ENCODE measurements at regions of chr1 and their contacts with region 1.

Region 1: DNA sequence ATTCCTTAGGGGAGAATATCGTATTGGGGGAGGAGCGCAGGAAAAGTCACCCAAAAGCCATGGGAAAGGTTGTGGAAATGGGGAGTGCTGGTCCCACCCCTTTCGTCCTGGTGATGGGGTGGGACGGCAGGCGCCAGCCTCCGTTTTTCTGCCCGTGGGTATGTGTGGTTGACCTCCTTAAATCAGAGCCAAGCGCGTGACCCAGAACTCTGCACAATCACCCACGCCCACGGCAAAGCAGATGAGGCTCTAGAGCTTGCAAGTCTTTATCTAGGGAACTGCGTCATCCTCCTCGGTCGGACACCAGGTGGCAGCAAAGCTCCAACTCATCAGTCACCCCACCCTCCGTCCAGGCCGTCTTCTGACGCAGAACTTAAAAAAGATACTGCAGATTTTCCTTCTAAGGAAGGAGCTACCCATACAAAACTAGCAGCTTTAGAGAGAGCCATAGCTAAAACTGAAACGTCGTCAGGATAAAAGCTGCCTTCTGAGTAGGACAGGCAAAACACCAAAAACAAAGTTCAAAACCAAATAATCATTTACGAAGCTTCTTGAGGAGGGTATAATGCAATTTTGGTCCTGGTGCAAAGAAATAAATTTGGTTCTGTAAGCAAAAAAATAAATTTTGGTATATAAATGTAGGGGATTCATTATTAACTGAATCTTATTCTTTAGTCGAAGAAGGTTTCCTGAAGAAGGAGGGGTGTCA is 62.0 kb downstream of the TBX19 start:
- DNase-seq: peak; percentile 76 to 96 (median 85)
- ATAC-seq: peak; percentile 98 to 99 (median 99)
- H3K4me3 ChIP-seq: no peak overlapping the region
- H3K4me3 Mint-ChIP-seq: peak overlapping the region in 2 of 3 donors; percentile 11 to 50
- H3K27ac ChIP-seq: peak overlapping the region; percentile 68
- H3K27ac Mint-ChIP-seq: peak overlapping the region; percentile 94
- H3K4me1 ChIP-seq: peaks cover 3 to 11% of the 10 kb centered on the region in 2 experiments
- H3K4me1 Mint-ChIP-seq: peaks cover 22 to 64% (median 33%) of the 10 kb centered on the region in 3 donors
- H3K27me3 ChIP-seq: no peaks in the 10 kb centered on the region
- H3K27me3 Mint-ChIP-seq: no peaks in the 10 kb centered on the region

Region 2: DNA sequence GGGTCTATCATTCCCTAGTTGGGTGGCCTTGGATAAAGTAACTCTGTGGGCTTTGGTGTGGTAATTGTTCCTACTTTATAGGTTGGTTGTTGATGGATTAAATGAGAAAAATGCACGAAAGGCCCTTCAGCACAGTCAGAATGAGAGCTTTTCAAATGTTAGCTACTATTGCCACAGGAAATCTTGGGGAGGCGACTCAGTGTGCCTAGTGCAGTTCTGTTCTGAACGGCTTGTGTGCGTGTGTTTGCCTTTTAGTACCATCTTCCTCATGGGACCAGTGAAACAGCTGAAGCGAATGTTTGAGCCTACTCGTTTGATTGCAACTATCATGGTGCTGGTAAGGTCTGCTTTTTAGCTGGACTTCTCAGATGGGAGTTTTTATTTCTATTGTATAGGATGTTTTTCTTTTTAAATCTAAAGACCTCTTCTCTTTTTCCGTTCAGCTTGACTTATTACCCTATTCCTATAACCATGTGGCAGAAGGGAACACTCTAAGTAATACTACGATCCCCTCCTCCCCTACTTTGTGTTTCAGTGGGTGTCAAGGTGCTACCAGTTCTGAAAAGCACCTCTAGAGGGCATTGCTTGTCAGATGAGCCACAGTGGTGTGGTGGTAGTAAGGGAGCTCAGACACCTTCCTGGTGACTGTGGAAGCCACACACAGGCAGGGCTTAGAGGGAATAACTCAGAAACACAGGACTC is 107.7 kb before region 1 on chr1:
- CTCF ChIA-PET with region 1: interaction called, 3 to 12 read pairs
- POLR2A ChIA-PET with region 1: no interaction called
- DNase-seq: peak in 27 of 35 experiments; percentile 3 to 65 (median 23)
- ATAC-seq: peak; percentile 85 to 93 (median 86)
- H3K4me3 ChIP-seq: no peak overlapping the region
- H3K4me3 Mint-ChIP-seq: no peak overlapping the region
- H3K27ac ChIP-seq: no peak overlapping the region
- H3K27ac Mint-ChIP-seq: no peak overlapping the region
- H3K4me1 ChIP-seq: peaks cover 0 to 8% of the 10 kb centered on the region in 2 experiments
- H3K4me1 Mint-ChIP-seq: peaks cover 61 to 65% (median 62%) of the 10 kb centered on the region in 3 donors
- H3K27me3 ChIP-seq: no peaks in the 10 kb centered on the region
- H3K27me3 Mint-ChIP-seq: no peaks in the 10 kb centered on the region

Region 3: GRCh38 chr1:168439456-168440375 is 97.0 kb after region 1 on chr1:
- CTCF ChIA-PET with region 1: interaction called, 10 to 20 read pairs
- POLR2A ChIA-PET with region 1: no interaction called
- DNase-seq: peak; percentile 63 to 92 (median 78)
- ATAC-seq: peak; percentile 85 to 88 (median 86)
- H3K4me3 ChIP-seq: peak overlapping the region in 1 of 2 donors; percentile 12
- H3K4me3 Mint-ChIP-seq: peak overlapping the region; percentile 62 to 73 (median 71)
- H3K27ac ChIP-seq: peak overlapping the region; percentile 22
- H3K27ac Mint-ChIP-seq: peak overlapping the region; percentile 83 to 89
- H3K4me1 ChIP-seq: peaks cover 11 to 31% of the 10 kb centered on the region in 2 experiments
- H3K4me1 Mint-ChIP-seq: peaks cover 53 to 60% (median 59%) of the 10 kb centered on the region in 3 donors
- H3K27me3 ChIP-seq: no peaks in the 10 kb centered on the region
- H3K27me3 Mint-ChIP-seq: peaks cover 0 to 3% of the 10 kb centered on the region in 2 donors

Region 4: DNA sequence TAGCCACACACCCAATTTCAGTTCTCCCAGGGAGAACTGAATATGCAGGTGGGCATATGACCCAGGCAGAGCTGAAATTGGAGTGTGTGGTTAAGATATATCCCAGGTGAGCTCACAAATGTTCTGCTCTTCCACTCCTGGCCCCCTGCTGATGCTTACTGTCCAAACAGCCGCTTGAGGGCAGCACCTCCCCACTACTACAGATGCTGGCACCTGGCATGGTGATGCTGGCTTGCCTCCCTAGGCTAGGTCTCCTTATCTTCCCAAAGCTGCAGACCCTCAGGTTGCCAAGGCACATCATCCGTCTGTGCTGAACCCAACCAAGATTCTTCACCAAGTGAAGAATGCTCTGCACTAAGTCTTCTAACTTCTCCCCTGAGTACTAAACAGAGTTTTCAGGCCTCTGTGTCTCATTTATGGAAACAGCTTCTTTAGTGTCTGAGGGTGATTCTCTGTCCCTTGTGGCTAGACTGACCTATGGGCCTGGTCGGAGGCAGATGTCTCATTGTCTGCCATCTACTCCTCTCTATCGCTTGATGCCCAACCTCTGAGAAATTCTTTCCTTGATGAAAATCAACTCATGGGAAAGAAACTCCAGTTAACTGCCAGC is 260.9 kb after region 1 on chr1:
- CTCF ChIA-PET with region 1: interaction called, 6 to 13 read pairs
- POLR2A ChIA-PET with region 1: no interaction called
- DNase-seq: peak; percentile 27 to 79 (median 62)
- ATAC-seq: peak; percentile 66 to 87 (median 77)
- H3K4me3 ChIP-seq: no peak overlapping the region
- H3K4me3 Mint-ChIP-seq: no peak overlapping the region
- H3K27ac ChIP-seq: no peak overlapping the region
- H3K27ac Mint-ChIP-seq: no peak overlapping the region
- H3K4me1 ChIP-seq: no peaks in the 10 kb centered on the region
- H3K4me1 Mint-ChIP-seq: no peaks in the 10 kb centered on the region
- H3K27me3 ChIP-seq: no peaks in the 10 kb centered on the region
- H3K27me3 Mint-ChIP-seq: peaks cover 1 to 4% of the 10 kb centered on the region in 2 donors

Region 5: DNA sequence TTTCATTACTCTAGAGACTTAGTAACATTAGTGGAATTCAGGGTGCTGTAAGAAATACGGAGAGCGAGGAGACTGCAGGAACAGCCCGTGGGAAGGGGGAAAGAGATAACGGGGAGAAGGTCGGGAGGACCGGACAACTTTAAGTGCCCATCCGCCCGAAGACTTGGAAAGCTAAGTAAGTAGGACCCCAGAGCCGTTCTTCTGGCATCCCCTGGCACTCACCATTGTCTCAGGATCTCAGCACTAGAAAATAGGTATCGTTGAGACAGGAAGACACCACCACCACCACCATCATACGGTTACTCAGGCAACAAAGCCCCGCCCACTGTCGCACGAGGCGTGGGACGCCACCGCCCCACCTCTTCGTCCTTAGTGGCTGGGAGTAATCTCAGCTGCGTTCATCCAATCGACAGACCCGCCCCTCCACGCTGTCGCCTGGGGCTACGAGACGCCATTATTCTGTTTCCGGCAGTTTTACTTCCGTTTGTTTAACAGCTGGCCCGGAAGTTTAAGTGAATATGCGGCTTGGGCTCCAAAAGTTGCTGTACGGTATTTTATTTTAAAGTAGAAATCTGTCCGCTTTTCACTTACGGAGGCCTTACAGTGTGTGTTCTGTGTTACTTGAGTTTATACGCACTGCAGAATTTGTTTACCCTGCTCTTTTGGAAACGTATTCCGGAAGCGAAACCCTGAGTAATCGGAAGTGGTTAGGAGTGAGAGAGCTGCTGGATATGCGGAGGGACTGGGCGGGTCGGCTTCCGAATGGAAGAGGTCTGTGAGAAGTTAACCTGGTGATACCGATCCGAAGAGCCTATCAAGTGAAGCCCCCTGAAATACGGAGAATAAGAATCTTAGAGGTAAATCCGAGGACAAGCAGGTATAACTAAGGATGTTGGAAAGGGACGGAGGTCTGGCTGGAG is 1025.0 kb after region 1 on chr1 and contains the starts of genes BLZF1 and NME7:
- CTCF ChIA-PET with region 1: interaction called in 1 of 2 experiments, 12 read pairs
- POLR2A ChIA-PET with region 1: interaction called in 1 of 2 experiments, 3 read pairs
- DNase-seq: peak; percentile 95 to 99 (median 99)
- ATAC-seq: peak; percentile 96 to 99 (median 98)
- H3K4me3 ChIP-seq: peak within 1 kb of the TSS; percentile 69 to 77
- H3K4me3 Mint-ChIP-seq: peak within 1 kb of the TSS in 1 of 3 donors; percentile 67
- H3K27ac ChIP-seq: peak within 1 kb of the TSS; percentile 84
- H3K27ac Mint-ChIP-seq: no peak within 1 kb of the TSS
- H3K4me1 ChIP-seq: peaks cover 4 to 31% of the 10 kb centered on the region in 2 experiments
- H3K4me1 Mint-ChIP-seq: peaks cover 21 to 41% (median 35%) of the 10 kb centered on the region in 3 donors
- H3K27me3 ChIP-seq: no peaks in the 10 kb centered on the region
- H3K27me3 Mint-ChIP-seq: no peaks in the 10 kb centered on the region
- total RNA-seq, gene BLZF1: 11.4 to 16.6 (median 15.6) TPM
- total RNA-seq, gene NME7: 7.4 to 14.4 (median 11.5) TPM

Measured in T-cell (primary cell).